Left colon (tissue), 2 donors: ENCODE measurements at regions of chr2 and their contacts with region 1.

Region 1: GRCh38 chr2:201971531-201972228 is 62.0 kb upstream of the FZD7 start:
- DNase-seq: no peak
- ATAC-seq: no peak

Region 2: DNA sequence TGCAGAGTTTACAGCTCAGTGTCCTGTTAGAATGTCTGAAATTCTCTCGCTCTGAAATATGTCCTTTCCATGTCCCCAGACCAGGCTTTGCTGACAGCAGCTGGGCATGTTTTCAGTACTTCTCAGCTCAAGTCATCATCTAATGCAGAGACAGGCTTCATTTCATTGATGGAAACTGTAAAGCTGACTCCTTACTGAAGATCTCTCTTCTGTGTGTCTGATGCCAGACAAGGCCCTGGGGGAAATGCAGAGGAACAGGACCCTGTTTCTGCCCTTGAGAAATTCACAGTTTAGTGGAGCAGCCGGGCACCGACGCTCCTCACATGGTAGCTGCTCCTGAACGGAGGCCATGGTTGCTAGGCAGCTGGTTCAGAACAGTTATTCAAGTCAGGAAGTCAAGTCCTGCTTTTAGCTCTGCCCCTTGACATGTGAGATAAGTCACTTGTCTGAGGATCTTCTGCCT is 37.4 kb after region 1 on chr2:
- intact Hi-C with region 1: loop called in 1 of 2 experiments (anchors 2 kb)
- DNase-seq: no peak
- ATAC-seq: no peak